Activated CD8-positive, alpha-beta T cell treated with anti-CD3 and anti-CD28 coated beads for 36 hours (primary cell): ENCODE measurements at regions of chr2 and their contacts with region 1.

Region 1: DNA sequence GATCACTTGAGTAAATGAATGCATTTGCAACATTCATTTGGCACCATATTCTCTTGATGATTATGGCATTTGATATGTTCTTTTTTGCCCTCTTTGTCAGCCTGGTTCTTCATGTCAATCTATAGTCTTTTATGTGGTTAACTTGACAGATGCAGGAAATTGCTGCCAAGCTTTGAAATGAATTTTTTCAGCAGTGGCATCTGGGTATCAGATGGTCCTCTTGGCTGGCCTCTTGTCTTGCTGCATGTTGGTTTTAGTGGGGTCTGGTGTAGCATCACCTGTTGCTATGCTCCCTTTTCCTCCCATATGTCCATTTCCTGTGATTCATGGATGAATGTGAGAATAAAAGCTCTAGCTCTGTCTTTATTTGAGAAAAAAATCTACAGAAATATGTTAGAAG is 119.9 kb downstream of the DPP4 start:
- DNase-seq: peak; percentile 35
- ATAC-seq: peak; percentile 25
- H3K4me3 Mint-ChIP-seq: peak overlapping the region; percentile 1
- H3K27ac Mint-ChIP-seq: peak overlapping the region; percentile 88
- H3K4me1 Mint-ChIP-seq: peaks cover 64% of the 10 kb centered on the region
- H3K27me3 Mint-ChIP-seq: no peaks in the 10 kb centered on the region
- CTCF ChIP-seq: no peak

Region 2: DNA sequence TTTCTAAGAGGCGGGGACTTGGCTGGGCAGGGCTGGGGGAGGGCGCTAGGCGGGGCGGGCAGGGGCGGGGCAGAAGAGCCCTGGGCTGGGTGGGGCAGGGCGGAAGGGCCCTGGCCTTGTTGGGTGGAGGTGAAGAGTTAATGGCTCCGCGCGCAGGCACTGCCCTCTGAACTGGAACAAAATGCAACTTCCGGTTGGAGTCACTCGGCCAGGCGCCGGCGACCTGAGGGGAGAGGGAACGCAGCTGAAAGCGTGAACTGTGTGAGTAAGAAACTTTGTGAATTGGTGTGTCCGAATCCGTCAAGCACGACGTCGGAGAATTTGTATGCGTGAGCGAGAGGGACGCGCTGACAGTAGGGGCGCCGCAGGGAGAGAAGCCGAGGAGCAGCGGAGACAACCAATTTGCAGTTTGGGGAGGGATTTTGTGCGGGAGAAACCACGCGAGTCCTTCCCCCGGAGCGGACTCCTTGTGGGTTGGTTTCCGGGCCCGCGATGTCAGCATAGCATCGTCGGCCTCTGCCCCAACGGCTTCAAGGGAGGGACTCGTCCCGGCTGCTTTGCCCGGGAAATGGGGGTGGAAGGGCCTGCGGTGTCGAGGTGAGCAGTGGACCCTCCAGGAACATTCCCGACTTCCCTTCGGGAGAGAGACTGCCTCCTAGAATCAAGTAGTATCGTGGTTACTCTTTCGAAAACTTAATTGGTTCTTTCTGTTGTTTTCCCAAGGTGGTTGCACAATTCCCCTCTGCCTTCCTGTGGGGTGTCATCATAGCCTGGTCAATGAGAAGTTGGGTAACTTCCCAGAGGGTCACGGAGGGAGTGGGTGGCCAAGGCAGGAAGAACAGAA is 793.7 kb before region 1 on chr2 and contains the start of gene TANK:
- CTCF ChIA-PET with region 1: no interaction called
- POLR2A ChIA-PET with region 1: no interaction called
- intact Hi-C with region 1: loop called (anchors 10 kb)
- DNase-seq: peak; percentile 94
- ATAC-seq: peak; percentile 97
- H3K4me3 Mint-ChIP-seq: peak within 1 kb of the TSS; percentile 91
- H3K27ac Mint-ChIP-seq: peak within 1 kb of the TSS; percentile 96
- H3K4me1 Mint-ChIP-seq: peaks cover 53% of the 10 kb centered on the region
- H3K27me3 Mint-ChIP-seq: no peaks in the 10 kb centered on the region
- CTCF ChIP-seq: no peak
- total RNA-seq, gene TANK: 49.2 to 51.6 TPM

Region 3: DNA sequence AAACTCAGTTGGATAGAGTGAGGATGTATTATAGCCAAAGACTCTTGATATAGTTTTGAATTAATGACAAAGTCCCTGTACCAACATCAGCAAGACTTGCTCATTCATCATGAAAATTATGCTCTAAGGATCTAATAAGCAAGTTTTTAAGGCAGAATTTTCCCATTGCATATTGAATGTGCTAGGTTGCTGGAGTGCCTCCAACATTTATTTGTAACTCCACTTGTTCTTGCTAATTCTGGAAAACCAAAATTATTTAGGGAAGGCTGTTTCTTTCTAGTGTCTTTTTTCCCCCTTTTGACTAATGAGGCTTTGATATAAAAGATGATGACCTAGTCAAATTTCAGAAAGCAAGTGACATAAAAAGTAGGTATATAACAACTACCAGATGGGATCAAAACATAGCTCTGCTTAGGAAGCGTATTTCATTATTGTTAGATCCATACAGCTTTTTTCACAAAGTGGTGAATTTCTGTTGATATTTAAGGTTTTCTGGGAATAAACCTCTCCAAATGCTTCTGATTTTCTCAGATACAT is 322.2 kb before region 1 on chr2:
- CTCF ChIA-PET with region 1: no interaction called
- POLR2A ChIA-PET with region 1: no interaction called
- intact Hi-C with region 1: no loop called
- DNase-seq: no peak
- ATAC-seq: no peak
- H3K4me3 Mint-ChIP-seq: no peak overlapping the region
- H3K27ac Mint-ChIP-seq: no peak overlapping the region
- H3K4me1 Mint-ChIP-seq: no peaks in the 10 kb centered on the region
- H3K27me3 Mint-ChIP-seq: peaks cover 6% of the 10 kb centered on the region
- CTCF ChIP-seq: no peak

Region 4: DNA sequence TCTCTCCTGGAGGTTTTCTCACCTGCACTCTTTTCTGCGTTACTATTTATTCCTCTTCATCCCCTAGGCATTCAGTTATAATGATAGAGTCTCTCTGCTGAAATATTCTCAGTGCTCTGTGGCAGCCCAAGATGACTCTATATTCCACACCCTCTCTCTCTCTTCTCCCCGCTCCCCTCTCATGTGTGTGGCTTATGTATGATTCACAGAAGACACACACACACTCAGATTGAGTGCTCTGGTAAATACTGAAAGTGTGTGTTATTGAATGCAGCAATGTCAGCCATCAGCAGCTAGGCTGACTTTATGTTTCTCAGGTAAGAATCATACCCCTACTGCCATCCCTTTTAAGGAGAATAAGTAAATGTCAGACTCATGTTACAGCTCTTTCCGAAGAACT is 128.7 kb before region 1 on chr2:
- CTCF ChIA-PET with region 1: no interaction called
- POLR2A ChIA-PET with region 1: no interaction called
- intact Hi-C with region 1: no loop called
- DNase-seq: peak; percentile 4
- ATAC-seq: peak; percentile 73
- H3K4me3 Mint-ChIP-seq: no peak overlapping the region
- H3K27ac Mint-ChIP-seq: no peak overlapping the region
- H3K4me1 Mint-ChIP-seq: peaks cover 11% of the 10 kb centered on the region
- H3K27me3 Mint-ChIP-seq: no peaks in the 10 kb centered on the region
- CTCF ChIP-seq: no peak

Region 5: GRCh38 chr2:161919873-161920272 is 34.2 kb before region 1 on chr2:
- CTCF ChIA-PET with region 1: no interaction called
- POLR2A ChIA-PET with region 1: no interaction called
- intact Hi-C with region 1: no loop called
- DNase-seq: no peak
- ATAC-seq: no peak
- H3K4me3 Mint-ChIP-seq: no peak overlapping the region
- H3K27ac Mint-ChIP-seq: no peak overlapping the region
- H3K4me1 Mint-ChIP-seq: peaks cover 3% of the 10 kb centered on the region
- H3K27me3 Mint-ChIP-seq: peaks cover 4% of the 10 kb centered on the region
- CTCF ChIP-seq: no peak

Region 6: GRCh38 chr2:161965994-161966393 is 11.9 kb after region 1 on chr2:
- CTCF ChIA-PET with region 1: interaction called, 19 read pairs
- POLR2A ChIA-PET with region 1: interaction called, 13 read pairs
- intact Hi-C with region 1: loop called (anchors 2 kb)
- DNase-seq: no peak
- ATAC-seq: peak; percentile 81
- H3K4me3 Mint-ChIP-seq: no peak overlapping the region
- H3K27ac Mint-ChIP-seq: no peak overlapping the region
- H3K4me1 Mint-ChIP-seq: peaks cover 41% of the 10 kb centered on the region
- H3K27me3 Mint-ChIP-seq: no peaks in the 10 kb centered on the region
- CTCF ChIP-seq: no peak

Region 7: DNA sequence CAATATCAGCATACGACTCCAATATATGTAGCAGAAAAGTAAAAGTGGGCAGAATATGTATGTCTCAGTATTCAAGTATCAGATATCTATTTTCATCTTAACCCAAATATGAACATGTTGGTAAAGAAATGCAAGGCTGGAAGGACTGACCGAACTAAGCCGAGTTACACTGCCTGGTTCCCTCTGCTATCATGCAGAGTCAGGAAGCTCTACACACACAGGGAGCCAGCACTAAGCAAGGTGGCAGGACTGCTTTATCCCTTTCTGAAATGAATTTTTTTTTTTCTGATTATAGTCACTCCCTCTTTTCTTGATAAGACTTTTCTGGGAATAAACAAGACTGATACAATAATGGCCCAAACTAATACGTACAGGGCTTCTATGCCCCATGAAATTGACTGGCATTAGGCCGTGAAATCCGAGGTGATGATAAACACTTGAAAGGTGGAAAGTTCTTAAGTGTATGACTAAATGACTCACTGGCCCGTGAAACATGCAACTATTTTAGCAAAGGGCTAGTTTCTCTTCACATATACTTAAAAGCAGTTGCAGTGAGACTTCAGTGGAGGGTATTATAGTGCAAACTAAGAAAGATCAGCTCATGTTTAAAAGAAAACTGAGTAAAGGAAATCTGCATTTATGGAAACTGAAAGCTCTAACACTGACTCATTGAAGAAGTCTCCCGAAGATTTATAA is 105.0 kb after region 1 on chr2:
- CTCF ChIA-PET with region 1: interaction called, 3 read pairs
- POLR2A ChIA-PET with region 1: no interaction called
- intact Hi-C with region 1: loop called (anchors 5 kb)
- DNase-seq: peak; percentile 51
- ATAC-seq: peak; percentile 79
- H3K4me3 Mint-ChIP-seq: peak overlapping the region; percentile 52
- H3K27ac Mint-ChIP-seq: peak overlapping the region; percentile 94
- H3K4me1 Mint-ChIP-seq: peaks cover 86% of the 10 kb centered on the region
- H3K27me3 Mint-ChIP-seq: no peaks in the 10 kb centered on the region
- CTCF ChIP-seq: no peak

Region 8: DNA sequence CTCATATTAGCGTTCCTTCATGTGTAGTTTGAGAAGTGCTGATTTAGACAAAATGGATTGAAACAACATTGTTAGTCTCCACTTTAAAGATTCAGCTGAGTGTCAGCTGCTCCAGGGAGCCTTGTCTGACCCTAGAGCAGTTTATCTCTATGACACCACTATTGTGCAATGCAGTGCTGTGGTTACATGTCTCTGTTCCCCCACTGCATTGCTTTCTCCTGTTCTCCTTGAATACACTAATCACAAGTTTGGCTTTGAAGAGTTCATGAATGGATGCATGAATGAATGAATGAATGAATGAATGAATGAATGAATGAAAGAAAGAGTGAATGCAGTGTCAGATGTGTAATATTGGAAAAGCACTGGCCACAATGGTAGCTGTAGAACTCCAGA is 159.7 kb after region 1 on chr2:
- CTCF ChIA-PET with region 1: no interaction called
- POLR2A ChIA-PET with region 1: no interaction called
- intact Hi-C with region 1: no loop called
- DNase-seq: no peak
- ATAC-seq: no peak
- H3K4me3 Mint-ChIP-seq: no peak overlapping the region
- H3K27ac Mint-ChIP-seq: no peak overlapping the region
- H3K4me1 Mint-ChIP-seq: peaks cover 3% of the 10 kb centered on the region
- H3K27me3 Mint-ChIP-seq: no peaks in the 10 kb centered on the region
- CTCF ChIP-seq: no peak

Region 9: DNA sequence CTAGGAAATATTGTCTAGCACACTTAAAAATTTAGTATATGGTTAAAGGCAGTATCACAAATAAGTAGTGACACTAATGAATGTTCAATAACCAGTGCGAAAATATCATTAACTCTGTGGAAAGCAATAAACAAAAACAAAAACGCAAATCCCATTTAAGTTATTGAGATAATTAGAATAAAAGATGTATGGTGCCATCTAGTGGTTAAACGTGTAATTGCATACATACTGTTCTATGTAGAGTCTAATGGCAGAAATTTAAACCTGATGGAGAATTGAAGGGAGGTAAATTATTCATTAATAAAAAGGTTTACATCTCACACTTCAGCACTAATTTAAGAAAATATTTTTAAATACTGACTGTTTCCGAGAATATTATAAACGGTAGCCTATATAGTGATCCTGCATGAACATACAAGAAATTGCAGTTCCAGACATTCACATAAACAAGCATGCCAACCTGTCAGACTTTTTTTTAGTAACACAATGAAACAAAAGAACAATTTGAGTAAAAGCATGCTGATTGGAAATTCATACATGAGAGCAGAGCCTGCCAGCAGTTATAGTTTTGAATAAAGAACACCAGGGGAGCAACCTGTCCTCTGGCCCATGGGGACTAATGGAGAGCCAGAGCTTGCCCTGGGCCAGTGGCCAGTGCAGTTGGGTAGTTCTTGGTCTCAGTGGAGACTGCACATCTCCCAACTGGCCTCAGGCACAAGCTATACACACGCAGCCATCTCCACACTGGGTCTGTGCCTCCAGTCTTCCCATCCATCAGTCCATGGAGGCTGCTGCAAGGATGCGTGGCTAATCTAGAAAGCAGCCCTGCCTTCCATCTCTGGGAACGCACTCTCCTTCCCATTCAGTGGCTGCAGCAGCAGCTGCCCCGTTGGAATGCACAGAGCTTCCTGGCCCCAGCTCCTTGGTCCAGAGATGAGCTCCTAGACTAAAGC is 170.0 kb after region 1 on chr2:
- CTCF ChIA-PET with region 1: interaction called, 44 read pairs
- POLR2A ChIA-PET with region 1: no interaction called
- intact Hi-C with region 1: loop called (anchors 5 kb)
- DNase-seq: no peak
- ATAC-seq: peak; percentile 65
- H3K4me3 Mint-ChIP-seq: no peak overlapping the region
- H3K27ac Mint-ChIP-seq: no peak overlapping the region
- H3K4me1 Mint-ChIP-seq: peaks cover 6% of the 10 kb centered on the region
- H3K27me3 Mint-ChIP-seq: no peaks in the 10 kb centered on the region
- CTCF ChIP-seq: peak; percentile 81